ENCODE measurements at regions of chr20 and their contacts with region 1.

Region 1: DNA sequence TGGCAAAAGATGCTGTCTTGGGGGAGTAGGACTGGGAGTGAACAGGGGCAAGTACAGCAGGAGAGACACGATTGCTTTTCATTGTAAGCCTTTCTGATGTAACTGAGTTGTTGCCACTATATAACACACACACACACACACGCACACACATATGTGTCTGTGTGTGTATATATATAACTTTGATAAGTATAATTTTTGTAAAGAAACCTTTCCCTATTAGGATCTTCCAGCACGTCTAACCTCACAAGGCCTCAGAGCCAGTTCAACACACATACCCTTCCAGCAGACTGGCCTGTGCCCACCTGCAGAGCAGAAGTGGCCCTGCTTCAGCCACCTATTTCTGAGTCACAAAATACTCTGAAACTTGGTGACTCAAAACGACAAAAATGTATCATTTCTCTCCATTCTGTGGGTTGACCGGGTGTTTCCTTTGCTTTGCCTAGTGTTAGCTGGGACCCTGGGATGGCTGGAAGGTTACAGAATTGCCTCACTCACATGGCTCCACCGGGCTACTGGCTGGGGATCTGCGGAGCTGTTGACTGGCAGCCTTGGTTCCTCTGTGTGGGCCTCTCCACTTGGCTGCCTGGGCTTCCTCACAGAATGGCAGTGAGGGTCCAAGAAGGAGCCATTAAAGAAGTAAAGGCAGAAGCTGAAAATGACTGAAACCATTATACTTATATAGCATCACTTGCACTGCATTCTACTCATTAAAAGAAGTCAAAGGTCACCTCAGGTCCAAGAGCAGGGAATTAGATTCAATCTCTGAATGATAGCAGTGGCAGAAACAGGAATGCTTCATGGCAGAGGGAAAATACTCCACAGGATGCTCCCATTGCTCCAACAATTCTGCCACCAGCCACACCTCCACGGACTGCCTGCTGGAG is 126.4 kb downstream of the BANF2 start:
- DNase-seq: no peak
- ATAC-seq: no peak
- H3K4me3 ChIP-seq: no peak overlapping the region
- H3K27ac ChIP-seq: peak overlapping the region; percentile 9 to 55
- H3K4me1 ChIP-seq: peaks cover 0 to 14% of the 10 kb centered on the region in 2 donors
- H3K27me3 ChIP-seq: no peaks in the 10 kb centered on the region
- CTCF ChIP-seq: no peak

Region 2: DNA sequence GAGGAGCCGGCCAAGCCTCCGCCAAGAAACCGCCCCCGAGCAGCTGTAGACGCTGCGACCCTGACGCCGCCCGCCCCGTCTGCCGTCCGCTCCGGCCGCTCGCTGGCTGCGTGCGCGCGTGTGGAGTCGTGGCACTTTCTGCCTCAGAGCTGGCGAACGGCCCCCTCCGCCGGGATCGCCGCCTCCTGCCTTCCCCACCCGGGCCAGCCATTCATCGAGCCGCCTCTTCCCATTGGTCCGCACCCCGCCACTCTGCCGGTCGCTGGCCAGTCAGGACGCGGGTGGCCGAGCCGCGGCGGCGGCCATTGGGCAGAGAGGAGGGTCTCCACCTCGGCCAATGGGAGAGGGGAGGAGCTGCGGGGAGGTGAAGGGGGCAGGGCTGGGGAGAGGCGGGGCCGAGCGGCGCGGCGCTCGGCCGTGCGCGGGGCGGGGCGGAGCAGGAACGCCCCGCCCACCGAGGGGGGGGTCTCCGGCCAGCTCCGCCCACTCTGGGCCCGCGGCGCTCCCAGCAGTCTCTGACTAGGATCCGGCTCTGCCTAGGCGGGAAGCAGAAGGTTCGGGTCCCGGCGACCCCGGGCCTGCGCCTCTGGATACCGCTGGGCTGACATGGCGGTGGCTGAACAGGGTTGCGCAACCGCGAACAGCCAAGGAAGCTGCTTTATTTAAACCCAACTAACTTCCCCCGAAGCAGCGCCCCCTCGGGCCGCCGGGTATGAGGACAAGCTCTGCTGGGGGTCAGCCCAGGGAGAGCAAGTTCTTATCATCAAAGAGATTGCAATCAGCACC is 143.9 kb before region 1 on chr20 and contains the start of gene RRBP1:
- intact Hi-C with region 1: loop called in 1 of 2 experiments (anchors 10 kb)
- DNase-seq: peak; percentile 93 to 99 (median 98)
- ATAC-seq: peak; percentile 94
- H3K4me3 ChIP-seq: peak within 1 kb of the TSS; percentile 62 to 73
- H3K27ac ChIP-seq: peak within 1 kb of the TSS; percentile 94 to 97
- H3K4me1 ChIP-seq: peaks cover 10 to 34% of the 10 kb centered on the region in 2 donors
- H3K27me3 ChIP-seq: no peaks in the 10 kb centered on the region
- CTCF ChIP-seq: peak; percentile 59 to 68
- polyA plus RNA-seq, gene RRBP1: 110 to 170 (median 124) TPM